ENCODE measurements at regions of chr7 and their contacts with region 1.

Region 1: GRCh38 chr7:93055543-93056107 is 62.2 kb downstream of the SAMD9 start:
- DNase-seq: no peak
- H3K4me3 Mint-ChIP-seq: no peak overlapping the region
- H3K27ac Mint-ChIP-seq: no peak overlapping the region
- H3K4me1 Mint-ChIP-seq: peaks cover 19% of the 10 kb centered on the region
- H3K27me3 Mint-ChIP-seq: peaks cover 6% of the 10 kb centered on the region

Region 2: GRCh38 chr7:92178927-92179924 is 876.4 kb before region 1 on chr7 and contains the start of gene LRRD1:
- intact Hi-C with region 1: loop called (anchors 5 kb)
- DNase-seq: peak; percentile 84
- H3K4me3 Mint-ChIP-seq: peak within 1 kb of the TSS; percentile 69
- H3K27ac Mint-ChIP-seq: no peak within 1 kb of the TSS
- H3K4me1 Mint-ChIP-seq: no peaks in the 10 kb centered on the region
- H3K27me3 Mint-ChIP-seq: peaks cover 15% of the 10 kb centered on the region
- total RNA-seq, gene LRRD1: not detected in 2 replicates

Region 3: GRCh38 chr7:92421676-92422435 is 633.8 kb before region 1 on chr7:
- intact Hi-C with region 1: loop called (anchors 1 kb)
- DNase-seq: no peak
- H3K4me3 Mint-ChIP-seq: no peak overlapping the region
- H3K27ac Mint-ChIP-seq: no peak overlapping the region
- H3K4me1 Mint-ChIP-seq: peaks cover 13% of the 10 kb centered on the region
- H3K27me3 Mint-ChIP-seq: peaks cover 3% of the 10 kb centered on the region

Region 4: DNA sequence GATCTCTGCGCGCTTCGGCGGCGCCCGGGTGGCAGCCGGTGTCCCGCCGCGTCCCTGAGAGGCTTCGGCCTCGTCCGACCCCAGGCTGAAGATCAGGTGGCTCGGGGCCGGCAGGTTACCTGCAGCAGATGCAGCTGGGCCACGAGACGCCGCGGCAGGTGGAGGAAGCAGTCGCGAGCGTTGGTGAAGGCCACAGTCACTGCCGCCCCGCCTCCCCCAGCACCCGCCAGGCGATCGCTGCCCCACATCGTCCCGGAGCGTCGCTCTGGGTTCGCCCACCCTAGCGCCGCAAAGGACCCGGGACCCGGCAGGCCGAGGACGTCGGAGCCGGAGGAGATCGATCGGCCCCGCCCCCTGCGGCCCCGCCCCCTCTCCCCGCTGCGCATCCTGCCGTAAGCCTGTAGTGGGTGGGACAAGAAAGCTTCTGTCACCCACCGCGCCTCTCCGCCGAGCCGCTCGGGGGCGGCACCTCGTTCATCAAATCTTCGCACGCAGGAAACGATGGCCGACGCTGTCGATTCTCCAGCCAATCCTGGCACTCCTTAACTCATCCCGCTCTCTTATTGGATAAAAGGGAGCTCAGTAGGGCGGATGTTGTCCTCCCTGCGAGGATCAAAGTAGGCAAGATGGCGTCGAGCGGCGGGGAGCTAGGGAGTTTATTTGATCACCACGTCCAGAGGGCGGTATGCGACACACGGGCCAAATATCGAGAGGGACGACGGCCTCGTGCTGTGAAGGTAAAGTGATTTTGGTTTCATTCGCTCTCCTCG is 527.3 kb before region 1 on chr7 and contains the starts of genes PEX1 and RBM48:
- intact Hi-C with region 1: loop called (anchors 5 kb)
- DNase-seq: peak; percentile 94
- H3K4me3 Mint-ChIP-seq: peak within 1 kb of the TSS; percentile 91
- H3K27ac Mint-ChIP-seq: peak within 1 kb of the TSS; percentile 94
- H3K4me1 Mint-ChIP-seq: peaks cover 24% of the 10 kb centered on the region
- H3K27me3 Mint-ChIP-seq: no peaks in the 10 kb centered on the region
- total RNA-seq, gene PEX1: 14.7 and 17.0 TPM in 2 replicates
- total RNA-seq, gene RBM48: 17.2 and 17.6 TPM in 2 replicates

Region 5: DNA sequence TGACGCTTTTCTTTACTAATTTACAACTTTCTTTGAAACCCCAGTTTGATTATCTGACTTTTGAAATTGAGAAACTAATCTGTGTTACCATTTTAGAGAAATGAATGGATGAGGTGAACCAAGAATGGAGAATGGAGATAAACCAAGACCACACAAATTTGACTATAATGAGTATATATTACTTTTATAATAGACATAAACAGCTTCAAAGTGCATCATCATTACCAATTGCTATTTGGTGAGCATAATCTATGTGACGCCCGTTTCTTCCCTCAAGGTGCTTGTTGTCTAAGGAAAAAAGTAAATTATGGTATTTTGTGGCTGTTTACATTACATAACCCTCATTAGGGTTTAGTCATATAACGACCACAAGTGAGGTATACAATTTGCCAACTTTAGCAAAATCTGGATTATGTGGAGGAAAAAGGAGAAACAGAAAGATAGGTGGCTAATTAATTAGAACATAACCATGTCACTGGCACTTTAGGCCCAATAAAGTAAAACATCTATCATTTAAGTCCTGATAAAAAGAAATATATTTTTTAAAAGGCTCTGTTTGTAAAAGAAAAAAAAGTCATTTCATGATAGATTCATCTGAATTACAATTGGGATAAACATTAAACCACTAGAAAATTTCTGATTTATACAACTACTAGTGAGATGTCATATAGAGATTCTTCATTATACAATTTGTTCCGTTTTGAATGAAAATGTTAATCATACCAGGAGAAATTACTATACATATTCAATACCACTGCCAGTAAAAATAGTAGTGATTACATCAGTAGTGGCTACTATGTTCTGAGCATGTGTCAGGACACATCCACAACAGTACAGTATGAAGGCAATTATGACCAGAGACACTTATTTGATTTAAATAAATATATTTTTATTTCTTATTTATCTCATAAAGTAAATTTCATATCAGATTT is 347.2 kb before region 1 on chr7:
- intact Hi-C with region 1: loop called (anchors 5 kb)
- DNase-seq: no peak
- H3K4me3 Mint-ChIP-seq: no peak overlapping the region
- H3K27ac Mint-ChIP-seq: peak overlapping the region; percentile 84
- H3K4me1 Mint-ChIP-seq: peaks cover 59% of the 10 kb centered on the region
- H3K27me3 Mint-ChIP-seq: no peaks in the 10 kb centered on the region

Region 6: DNA sequence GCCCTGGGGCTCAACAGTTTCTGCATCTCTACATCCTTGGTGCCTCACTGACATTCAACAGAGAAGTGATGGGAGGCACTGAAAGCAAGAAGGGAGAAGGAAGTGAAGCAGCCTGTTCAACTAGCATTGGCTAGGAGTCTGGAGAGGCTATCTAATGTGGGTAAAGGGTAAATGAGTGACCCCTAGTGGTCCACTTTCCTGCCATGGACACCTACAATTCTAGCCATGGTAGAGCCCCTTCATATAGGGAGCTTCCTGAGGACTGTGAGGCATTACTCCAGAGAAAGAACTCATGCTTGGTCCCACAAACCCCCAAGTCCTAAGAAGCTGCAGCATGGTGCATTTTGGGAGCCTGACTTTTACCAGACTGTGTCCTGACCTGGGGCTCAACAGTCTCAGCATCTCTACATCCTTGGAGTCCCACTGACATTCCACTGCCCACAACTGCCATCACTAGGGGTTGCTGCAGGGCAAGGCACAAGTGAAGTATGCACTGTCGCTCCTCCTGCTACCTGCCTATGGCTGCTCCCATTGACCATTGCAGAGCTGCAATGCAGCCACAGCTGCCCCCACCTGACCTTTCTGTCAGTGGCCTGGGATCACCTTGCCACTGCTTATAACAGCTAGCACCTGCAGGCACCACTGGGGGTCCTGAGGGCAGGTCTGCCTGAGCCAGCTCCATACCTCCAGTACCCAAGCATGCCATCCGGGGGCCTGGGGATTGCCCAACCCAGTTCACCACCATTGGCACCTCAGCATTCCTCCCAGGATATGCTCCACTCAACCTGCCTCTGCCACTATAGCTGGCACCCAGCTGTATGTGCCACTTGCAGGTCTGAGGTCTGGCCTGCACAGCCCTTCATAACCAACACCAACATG is 175.2 kb before region 1 on chr7:
- intact Hi-C with region 1: loop called (anchors 1 kb)
- DNase-seq: no peak
- H3K4me3 Mint-ChIP-seq: no peak overlapping the region
- H3K27ac Mint-ChIP-seq: no peak overlapping the region
- H3K4me1 Mint-ChIP-seq: peaks cover 67% of the 10 kb centered on the region
- H3K27me3 Mint-ChIP-seq: no peaks in the 10 kb centered on the region

Region 7: GRCh38 chr7:93298671-93299070 is 243.0 kb after region 1 on chr7:
- intact Hi-C with region 1: no loop called
- DNase-seq: no peak
- H3K4me3 Mint-ChIP-seq: no peak overlapping the region
- H3K27ac Mint-ChIP-seq: no peak overlapping the region
- H3K4me1 Mint-ChIP-seq: no peaks in the 10 kb centered on the region
- H3K27me3 Mint-ChIP-seq: no peaks in the 10 kb centered on the region

Region 8: DNA sequence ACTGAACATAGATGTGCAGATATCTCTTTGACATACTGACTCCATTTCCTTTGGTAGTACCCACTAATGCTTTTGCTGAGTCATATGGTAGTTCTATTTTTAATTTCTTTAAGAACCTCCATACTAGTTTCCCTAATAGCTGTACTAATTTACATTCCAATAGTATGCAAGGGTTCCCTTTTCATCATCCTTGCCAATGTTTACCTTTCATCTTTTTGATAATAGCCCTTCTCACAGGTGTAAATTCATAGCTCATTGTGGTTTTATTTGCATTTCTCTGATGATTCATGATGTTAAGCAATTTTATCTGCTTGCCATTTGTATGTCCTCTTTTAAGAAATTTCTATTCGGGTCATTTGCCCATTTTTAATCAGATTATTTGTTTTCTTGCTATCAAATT is 359.0 kb after region 1 on chr7:
- intact Hi-C with region 1: no loop called
- DNase-seq: no peak
- H3K4me3 Mint-ChIP-seq: no peak overlapping the region
- H3K27ac Mint-ChIP-seq: no peak overlapping the region
- H3K4me1 Mint-ChIP-seq: no peaks in the 10 kb centered on the region
- H3K27me3 Mint-ChIP-seq: peaks cover 11% of the 10 kb centered on the region